Lower leg skin (tissue), 4 donors: ENCODE measurements at regions of chr7 and their contacts with region 1.

Region 1: GRCh38 chr7:66247378-66248078 is 42.4 kb downstream of the TPST1 start:
- DNase-seq: no peak
- H3K4me3 ChIP-seq: no peak overlapping the region
- CTCF ChIP-seq: no peak
- POLR2A ChIP-seq: no peak

Region 2: DNA sequence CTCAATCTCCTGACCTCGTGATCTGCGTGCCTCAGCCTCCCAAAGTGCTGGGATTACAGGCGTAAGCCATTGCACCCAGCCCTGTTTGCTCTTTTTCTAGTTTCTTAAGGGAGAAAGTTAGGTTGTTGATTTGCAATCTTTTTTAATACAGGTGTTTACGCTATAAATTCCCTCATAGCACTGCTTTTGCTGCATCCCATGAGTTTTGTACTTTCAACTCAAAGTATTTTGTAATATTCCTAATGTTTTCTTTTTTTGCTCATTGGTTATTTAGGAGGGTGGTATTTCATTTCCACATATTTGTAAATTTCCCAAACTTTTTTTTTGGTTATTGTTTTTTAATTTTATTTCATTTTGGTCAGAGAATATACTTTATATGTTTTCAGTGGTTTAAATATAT is 30.8 kb before region 1 on chr7:
- intact Hi-C with region 1: loop called (anchors 2 kb)
- DNase-seq: no peak
- H3K4me3 ChIP-seq: no peak overlapping the region
- CTCF ChIP-seq: no peak
- POLR2A ChIP-seq: no peak

Region 3: DNA sequence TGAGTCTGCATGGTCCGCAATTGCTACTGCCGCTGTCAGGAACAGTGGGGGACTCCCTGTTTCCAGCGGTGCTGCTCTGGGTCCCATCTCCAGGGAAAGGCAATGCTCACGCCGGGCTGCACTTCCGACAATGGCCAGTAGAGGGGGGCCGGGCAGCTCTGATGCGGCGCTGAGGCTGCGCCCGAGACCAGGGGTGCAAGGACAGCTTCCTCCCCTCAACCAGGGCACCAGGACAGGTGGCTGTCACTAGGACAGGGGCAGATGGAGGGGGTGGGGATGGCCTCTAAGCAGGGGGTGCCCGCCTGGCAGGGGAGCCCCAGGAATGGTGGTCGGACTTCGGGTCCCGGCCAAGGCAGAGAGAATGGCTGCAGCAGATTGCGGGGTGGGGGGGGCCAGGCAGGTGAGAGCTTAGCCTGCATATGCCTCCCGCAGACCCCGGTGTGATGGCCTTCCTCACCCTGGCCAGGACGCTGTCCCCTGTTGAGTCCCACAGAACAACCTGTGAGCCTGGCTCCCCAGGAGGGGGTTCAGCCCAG is 310.1 kb after region 1 on chr7:
- intact Hi-C with region 1: no loop called
- DNase-seq: peak; percentile 46 to 95
- H3K4me3 ChIP-seq: no peak overlapping the region
- CTCF ChIP-seq: peak in 1 of 3 donors; percentile 91
- POLR2A ChIP-seq: no peak